Activated CD8-positive, alpha-beta memory T cell treated with anti-CD3 and anti-CD28 coated beads, Interleukin-2, amount 10 ng/mL, durations not matched to agents 7 days and 5 days (primary cell): ENCODE measurements at regions of chr17 and their contacts with region 1.

Region 1: GRCh38 chr17:48024937-48025906 is 12.4 kb downstream of the COPZ2 start:
- DNase-seq: peak; percentile 98
- ATAC-seq: peak; percentile 91
- H3K4me3 Mint-ChIP-seq: peak overlapping the region; percentile 84
- H3K27ac Mint-ChIP-seq: peak overlapping the region; percentile 78
- H3K4me1 Mint-ChIP-seq: peaks cover 36% of the 10 kb centered on the region
- H3K27me3 Mint-ChIP-seq: peaks cover 16% of the 10 kb centered on the region

Region 2: DNA sequence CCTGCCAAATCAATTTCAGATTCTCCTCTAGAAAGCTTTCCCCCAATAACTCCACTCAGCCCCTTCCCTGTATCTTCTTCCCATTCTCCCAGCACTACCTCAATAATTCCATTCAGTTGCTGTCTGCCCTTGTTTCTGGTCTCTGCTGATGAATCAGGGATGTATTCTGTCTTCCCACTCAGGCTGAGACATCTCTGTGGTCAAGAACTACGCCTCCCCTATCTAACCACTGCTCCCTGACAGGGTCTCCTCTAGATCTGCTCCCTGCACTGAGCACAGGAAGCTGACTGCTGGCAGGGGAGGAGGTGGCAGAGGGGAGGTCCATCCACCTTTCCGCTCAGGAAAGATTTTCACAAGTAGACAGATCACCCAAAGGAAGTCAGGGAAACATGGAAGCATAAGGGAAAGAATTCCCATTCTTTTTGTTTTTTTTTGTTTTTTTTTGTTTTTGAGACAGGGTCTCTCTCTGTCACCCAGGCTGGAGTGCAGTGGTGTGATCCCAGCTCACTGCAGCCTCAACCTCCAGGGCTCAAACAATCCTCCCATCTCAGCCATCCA is 146.1 kb before region 1 on chr17:
- CTCF ChIA-PET with region 1: no interaction called
- DNase-seq: no peak
- ATAC-seq: no peak
- H3K4me3 Mint-ChIP-seq: no peak overlapping the region
- H3K27ac Mint-ChIP-seq: no peak overlapping the region
- H3K4me1 Mint-ChIP-seq: peaks cover 7% of the 10 kb centered on the region
- H3K27me3 Mint-ChIP-seq: peaks cover 39% of the 10 kb centered on the region

Region 3: GRCh38 chr17:47902039-47902744 is 123.0 kb before region 1 on chr17:
- CTCF ChIA-PET with region 1: no interaction called
- DNase-seq: no peak
- ATAC-seq: no peak
- H3K4me3 Mint-ChIP-seq: no peak overlapping the region
- H3K27ac Mint-ChIP-seq: no peak overlapping the region
- H3K4me1 Mint-ChIP-seq: peaks cover 36% of the 10 kb centered on the region
- H3K27me3 Mint-ChIP-seq: no peaks in the 10 kb centered on the region

Region 4: DNA sequence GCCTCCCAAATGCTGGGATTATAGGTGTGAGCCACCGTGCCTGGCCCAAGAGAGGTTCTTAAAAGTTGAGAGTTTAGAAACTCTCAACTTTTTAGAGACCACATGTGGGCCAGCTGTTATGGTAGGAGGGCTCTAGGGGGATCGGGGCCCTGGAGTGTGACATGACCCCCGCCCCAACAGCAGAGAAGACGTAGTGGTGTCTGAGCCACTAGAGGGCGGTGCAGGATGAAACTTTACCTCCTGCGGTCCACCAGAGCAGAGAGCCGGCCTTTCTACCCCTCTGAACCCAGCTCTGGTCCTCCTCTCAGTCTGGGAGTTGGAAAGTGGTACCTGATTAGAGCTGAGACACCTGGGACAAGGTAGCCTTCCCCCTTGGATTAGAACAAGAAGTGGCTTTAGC is 46.9 kb before region 1 on chr17:
- CTCF ChIA-PET with region 1: interaction called, 98 read pairs
- DNase-seq: peak; percentile 76
- ATAC-seq: peak; percentile 83
- H3K4me3 Mint-ChIP-seq: no peak overlapping the region
- H3K27ac Mint-ChIP-seq: no peak overlapping the region
- H3K4me1 Mint-ChIP-seq: peaks cover 30% of the 10 kb centered on the region
- H3K27me3 Mint-ChIP-seq: no peaks in the 10 kb centered on the region

Region 5: DNA sequence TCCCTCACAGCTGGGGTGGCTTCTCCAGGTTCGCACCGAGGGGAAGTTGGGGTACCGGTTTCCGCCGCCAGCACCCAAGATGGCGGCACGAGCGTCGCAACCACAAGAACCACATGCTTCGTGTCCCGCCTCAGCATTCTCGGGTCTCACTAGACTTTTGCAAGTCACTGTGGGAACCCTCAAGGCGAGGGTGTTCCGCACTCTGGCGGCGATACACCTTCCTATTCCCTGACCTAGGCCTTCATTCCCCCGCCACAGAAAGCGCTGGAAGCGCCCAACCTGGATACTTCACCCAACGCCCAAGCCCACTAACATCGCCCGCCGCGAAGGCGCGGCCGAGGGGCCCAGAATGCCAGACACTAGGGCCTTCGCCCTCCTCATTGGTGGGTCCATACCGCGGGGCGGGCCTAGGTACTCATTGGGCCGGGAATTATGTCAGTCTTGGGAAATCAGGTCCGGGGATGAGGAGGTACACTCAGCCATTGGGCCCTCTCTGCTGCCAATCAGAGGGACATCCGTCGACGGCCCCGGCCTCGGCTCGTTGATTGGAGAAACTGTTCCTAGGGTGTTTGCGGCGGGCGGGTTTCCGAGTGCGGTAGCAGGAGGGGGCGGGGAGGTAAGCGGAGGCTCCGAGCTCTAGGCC is 22.6 kb after region 1 on chr17 and contains the start of gene NFE2L1:
- CTCF ChIA-PET with region 1: interaction called, 99 read pairs
- DNase-seq: peak; percentile 100
- ATAC-seq: peak; percentile 95
- H3K4me3 Mint-ChIP-seq: peak within 1 kb of the TSS; percentile 98
- H3K27ac Mint-ChIP-seq: peak within 1 kb of the TSS; percentile 96
- H3K4me1 Mint-ChIP-seq: peaks cover 60% of the 10 kb centered on the region
- H3K27me3 Mint-ChIP-seq: no peaks in the 10 kb centered on the region
- total RNA-seq, gene NFE2L1: 56.1 to 80.8 TPM

Region 6: DNA sequence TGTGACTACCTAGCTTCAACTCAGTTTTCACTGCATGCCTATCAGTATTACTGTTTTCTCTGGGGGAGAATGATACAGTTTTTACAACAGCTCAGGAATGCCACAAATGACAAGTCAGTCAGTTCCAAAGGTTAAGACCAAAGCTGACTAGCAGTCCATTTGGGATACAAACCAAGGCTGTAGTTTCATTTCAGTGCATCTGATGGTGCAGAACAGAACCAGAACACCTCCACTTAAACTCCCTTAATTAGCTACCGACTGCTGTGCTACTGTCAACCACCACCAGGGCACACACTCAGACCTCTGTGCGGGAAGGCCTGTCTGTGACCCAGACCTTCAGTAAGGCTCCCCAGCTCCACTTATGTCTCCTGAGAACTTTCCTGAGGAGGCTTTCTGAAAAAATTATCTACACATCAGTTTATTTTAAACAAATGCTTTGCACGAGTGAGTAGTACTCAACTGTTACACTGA is 43.3 kb after region 1 on chr17:
- CTCF ChIA-PET with region 1: interaction called, 191 read pairs
- DNase-seq: no peak
- ATAC-seq: peak; percentile 61
- H3K4me3 Mint-ChIP-seq: no peak overlapping the region
- H3K27ac Mint-ChIP-seq: no peak overlapping the region
- H3K4me1 Mint-ChIP-seq: no peaks in the 10 kb centered on the region
- H3K27me3 Mint-ChIP-seq: no peaks in the 10 kb centered on the region

Region 7: GRCh38 chr17:48107168-48108132 is 82.2 kb after region 1 on chr17 and contains the start of gene SNX11:
- CTCF ChIA-PET with region 1: interaction called, 29 read pairs
- DNase-seq: peak; percentile 96
- ATAC-seq: peak; percentile 95
- H3K4me3 Mint-ChIP-seq: peak within 1 kb of the TSS; percentile 96
- H3K27ac Mint-ChIP-seq: peak within 1 kb of the TSS; percentile 93
- H3K4me1 Mint-ChIP-seq: peaks cover 64% of the 10 kb centered on the region
- H3K27me3 Mint-ChIP-seq: no peaks in the 10 kb centered on the region
- total RNA-seq, gene SNX11: 25.1 to 32.6 TPM

Region 8: GRCh38 chr17:48143629-48144028 is 118.4 kb after region 1 on chr17:
- CTCF ChIA-PET with region 1: no interaction called
- DNase-seq: no peak
- ATAC-seq: no peak
- H3K4me3 Mint-ChIP-seq: no peak overlapping the region
- H3K27ac Mint-ChIP-seq: no peak overlapping the region
- H3K4me1 Mint-ChIP-seq: peaks cover 8% of the 10 kb centered on the region
- H3K27me3 Mint-ChIP-seq: no peaks in the 10 kb centered on the region

Region 9: GRCh38 chr17:48335858-48336500 is 310.8 kb after region 1 on chr17:
- CTCF ChIA-PET with region 1: interaction called, 13 read pairs
- DNase-seq: no peak
- ATAC-seq: peak; percentile 63
- H3K4me3 Mint-ChIP-seq: no peak overlapping the region
- H3K27ac Mint-ChIP-seq: no peak overlapping the region
- H3K4me1 Mint-ChIP-seq: peaks cover 15% of the 10 kb centered on the region
- H3K27me3 Mint-ChIP-seq: no peaks in the 10 kb centered on the region